Activated CD4-positive, alpha-beta T cell treated with anti-CD3 and anti-CD28 coated beads, Interleukin-2, amount 10 ng/mL, durations not matched to agents 7 days and 5 days (primary cell): ENCODE measurements at regions of chr10 and their contacts with region 1.

Region 1: GRCh38 chr10:6401562-6402348 is 178.3 kb downstream of the PRKCQ start:
- DNase-seq: peak; percentile 75
- H3K4me3 Mint-ChIP-seq: peak overlapping the region; percentile 2
- H3K27ac Mint-ChIP-seq: peak overlapping the region; percentile 3
- H3K4me1 Mint-ChIP-seq: peaks cover 47% of the 10 kb centered on the region
- H3K27me3 Mint-ChIP-seq: peaks cover 8% of the 10 kb centered on the region

Region 2: DNA sequence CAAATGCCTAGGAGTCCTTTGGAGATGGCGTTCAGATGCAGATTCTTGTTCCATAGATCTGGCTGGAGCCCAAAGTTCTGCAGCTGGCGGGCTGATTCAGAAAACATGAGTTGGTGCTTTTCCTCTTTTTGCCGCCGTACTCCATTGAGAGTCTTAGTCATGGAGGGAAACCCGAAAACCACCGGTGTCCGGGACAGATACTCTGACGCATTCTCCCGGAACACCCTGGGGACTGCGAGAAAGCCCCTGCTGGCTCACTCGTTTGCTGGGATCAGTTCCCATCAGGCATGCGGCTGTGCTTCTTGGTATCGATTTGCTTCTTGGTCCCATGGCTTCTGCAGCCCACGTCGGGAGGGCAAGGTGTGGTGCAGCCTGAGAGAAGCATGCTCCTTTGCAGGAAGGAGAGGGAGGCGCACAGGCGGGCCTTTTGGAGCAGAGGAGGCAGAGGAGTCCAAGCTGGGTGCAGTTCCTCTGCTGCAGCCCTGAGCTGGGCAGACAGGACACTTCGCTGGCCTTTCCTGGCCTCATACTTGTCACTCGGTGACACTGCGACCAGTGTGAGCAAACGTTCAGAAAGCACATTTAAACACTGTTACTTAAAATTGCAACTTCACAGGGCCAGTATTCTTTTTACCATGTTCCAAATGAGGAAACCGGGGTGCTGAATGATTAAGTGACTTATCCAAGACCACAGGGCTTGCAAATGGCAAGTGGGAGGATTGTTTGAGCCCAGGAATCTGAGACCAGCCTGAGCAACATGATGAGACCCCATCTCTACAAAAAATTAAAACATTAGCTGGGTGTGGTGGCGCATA is 229.7 kb before region 1 on chr10:
- CTCF ChIA-PET with region 1: interaction called, 12 read pairs
- POLR2A ChIA-PET with region 1: no interaction called
- DNase-seq: no peak
- H3K4me3 Mint-ChIP-seq: peak overlapping the region; percentile 45
- H3K27ac Mint-ChIP-seq: peak overlapping the region; percentile 83
- H3K4me1 Mint-ChIP-seq: peaks cover 90% of the 10 kb centered on the region
- H3K27me3 Mint-ChIP-seq: no peaks in the 10 kb centered on the region

Region 3: GRCh38 chr10:6269953-6270867 is 131.5 kb before region 1 on chr10:
- CTCF ChIA-PET with region 1: interaction called, 13 read pairs
- POLR2A ChIA-PET with region 1: interaction called, 9 read pairs
- DNase-seq: peak; percentile 81
- H3K4me3 Mint-ChIP-seq: peak overlapping the region; percentile 30
- H3K27ac Mint-ChIP-seq: peak overlapping the region; percentile 95
- H3K4me1 Mint-ChIP-seq: peaks cover 72% of the 10 kb centered on the region
- H3K27me3 Mint-ChIP-seq: no peaks in the 10 kb centered on the region

Region 4: DNA sequence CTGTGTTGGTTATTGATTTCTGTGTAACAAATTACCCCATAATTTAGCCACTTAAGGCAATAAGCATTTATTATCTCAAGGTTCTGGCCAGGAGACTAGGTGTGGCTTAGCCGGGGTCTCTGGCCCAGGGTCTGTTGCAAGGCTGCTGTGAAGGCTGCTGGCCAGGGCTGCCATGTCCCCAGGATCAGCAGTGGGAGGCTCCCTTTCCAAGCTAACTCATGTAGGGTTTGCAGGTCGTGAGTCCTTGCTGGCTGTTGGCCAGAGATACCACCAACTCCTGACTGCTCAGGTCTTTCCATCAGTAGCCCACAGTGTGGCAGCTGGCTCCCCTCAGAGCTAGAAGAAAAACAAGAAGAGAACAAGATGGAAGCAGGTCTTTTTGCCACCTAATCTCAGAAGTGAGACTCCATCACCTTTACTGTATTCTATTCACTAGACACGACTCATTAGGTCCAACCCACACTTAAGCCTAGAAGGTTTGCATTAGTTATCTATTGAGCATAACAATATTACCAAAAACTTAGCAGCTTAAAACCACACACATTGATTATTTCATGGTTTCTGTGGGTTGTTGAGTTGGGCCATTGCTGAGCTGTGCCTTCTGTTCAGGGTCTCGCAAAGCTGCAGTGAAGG is 13.4 kb before region 1 on chr10:
- CTCF ChIA-PET with region 1: interaction called, 13 read pairs
- POLR2A ChIA-PET with region 1: no interaction called
- DNase-seq: no peak
- H3K4me3 Mint-ChIP-seq: no peak overlapping the region
- H3K27ac Mint-ChIP-seq: no peak overlapping the region
- H3K4me1 Mint-ChIP-seq: peaks cover 13% of the 10 kb centered on the region
- H3K27me3 Mint-ChIP-seq: no peaks in the 10 kb centered on the region

Region 5: DNA sequence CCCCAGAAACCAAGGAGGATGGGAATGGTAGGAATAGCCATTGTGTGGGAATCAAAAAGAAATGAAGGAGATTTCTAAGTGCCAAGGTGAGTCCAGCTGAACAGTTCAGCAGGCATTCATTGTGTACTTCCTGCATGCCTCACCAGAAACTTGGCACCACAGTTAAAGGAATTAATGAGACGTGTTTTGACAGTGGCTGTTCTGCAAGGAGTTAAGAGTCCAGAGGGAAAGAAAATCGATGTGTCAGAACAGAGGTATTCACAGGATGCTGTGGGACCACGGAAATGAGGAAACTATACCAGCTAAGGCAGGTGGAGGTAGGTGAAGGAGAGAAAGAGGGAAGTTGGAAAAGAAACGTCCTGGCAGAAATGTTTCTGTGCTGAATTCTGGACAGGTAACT is 100.2 kb after region 1 on chr10:
- CTCF ChIA-PET with region 1: no interaction called
- POLR2A ChIA-PET with region 1: no interaction called
- DNase-seq: no peak
- H3K4me3 Mint-ChIP-seq: no peak overlapping the region
- H3K27ac Mint-ChIP-seq: no peak overlapping the region
- H3K4me1 Mint-ChIP-seq: peaks cover 39% of the 10 kb centered on the region
- H3K27me3 Mint-ChIP-seq: no peaks in the 10 kb centered on the region